ENCODE measurements at regions of chr2 and their contacts with region 1.

Region 1: DNA sequence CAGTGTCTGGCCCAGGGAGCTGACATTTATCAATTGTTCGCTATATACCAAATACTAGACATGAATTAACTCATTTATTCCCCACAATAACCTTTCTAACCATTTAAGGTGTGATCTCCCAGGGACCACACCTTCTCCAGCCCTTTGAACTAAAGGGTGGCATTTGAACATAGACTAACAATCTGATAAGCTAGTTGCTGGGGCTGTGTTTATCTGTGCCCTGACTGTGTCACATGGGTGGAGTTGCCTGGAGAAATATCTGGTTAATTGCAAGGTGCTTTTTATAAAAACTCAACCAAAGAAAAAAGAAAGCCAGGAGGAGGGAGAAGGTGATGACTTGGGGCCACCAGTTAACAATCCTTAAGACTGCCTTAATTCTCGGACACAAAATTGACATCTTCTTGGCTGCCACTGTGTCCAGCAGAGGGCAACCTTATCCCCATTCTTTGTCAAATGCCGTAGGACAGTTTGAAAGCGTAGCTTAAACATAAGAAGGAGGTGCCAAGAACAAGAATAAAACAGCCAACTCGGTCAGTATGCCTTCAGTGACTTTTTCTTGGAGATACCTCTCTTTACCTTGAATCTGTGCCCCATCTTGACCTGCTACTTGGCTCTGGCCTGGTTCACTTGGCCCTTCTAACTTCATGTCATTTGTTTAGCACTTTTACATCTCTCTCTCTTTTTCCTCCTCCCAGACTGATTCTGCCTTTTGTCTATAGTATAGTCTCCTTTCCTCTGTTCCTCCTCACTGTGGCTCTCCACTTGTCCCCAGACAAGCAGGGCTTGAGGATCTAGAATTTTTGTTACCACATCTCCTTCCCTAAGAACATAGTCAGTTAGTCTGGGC is 183.4 kb downstream of the MYO3B start:
- DNase-seq: peak; percentile 79
- ATAC-seq: peak; percentile 88
- H3K4me3 Mint-ChIP-seq: peak overlapping the region; percentile 1
- H3K27ac Mint-ChIP-seq: peak overlapping the region; percentile 68
- H3K4me1 Mint-ChIP-seq: peaks cover 36% of the 10 kb centered on the region
- H3K27me3 Mint-ChIP-seq: peaks cover 14% of the 10 kb centered on the region

Region 2: DNA sequence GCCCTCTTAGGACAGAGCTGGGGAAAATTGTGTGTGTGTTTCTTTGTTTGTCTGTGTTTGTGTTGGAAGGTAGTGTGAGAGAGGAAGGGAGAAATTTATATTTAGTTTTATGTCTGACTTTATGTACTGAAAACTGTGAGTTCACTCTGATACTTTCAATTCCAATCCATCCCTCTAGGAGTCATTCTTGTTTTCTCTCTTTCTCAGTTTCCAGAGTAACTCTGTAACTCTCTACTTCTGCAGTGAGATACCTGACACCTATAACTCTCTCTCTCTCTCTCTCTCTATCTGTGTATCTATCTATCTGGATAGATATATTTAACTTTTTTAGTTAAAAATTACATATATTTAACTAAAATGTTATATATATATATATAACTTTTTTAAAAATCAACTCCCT is 405.4 kb before region 1 on chr2:
- CTCF ChIA-PET with region 1: no interaction called
- POLR2A ChIA-PET with region 1: no interaction called
- DNase-seq: no peak
- ATAC-seq: no peak
- H3K4me3 Mint-ChIP-seq: no peak overlapping the region
- H3K27ac Mint-ChIP-seq: no peak overlapping the region
- H3K4me1 Mint-ChIP-seq: no peaks in the 10 kb centered on the region
- H3K27me3 Mint-ChIP-seq: no peaks in the 10 kb centered on the region

Region 3: DNA sequence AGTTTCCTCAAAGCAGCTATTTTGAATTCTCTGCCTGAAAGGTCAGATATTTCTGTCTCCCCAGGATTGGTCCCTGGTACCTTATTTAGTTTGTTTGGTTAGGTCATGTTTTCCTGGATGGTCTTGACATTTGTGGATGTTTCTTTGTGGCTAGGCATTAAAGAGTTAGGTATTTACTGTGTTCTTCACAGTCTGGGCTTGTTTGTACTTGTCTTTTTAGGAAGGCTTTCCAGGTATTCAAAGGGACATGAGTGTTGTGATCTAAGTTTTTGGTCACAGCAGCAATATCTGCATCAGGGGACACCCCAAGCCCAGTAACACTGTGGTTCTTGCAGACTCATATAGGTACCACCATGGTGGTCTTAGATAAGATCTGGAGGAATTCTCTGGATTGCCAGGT is 171.6 kb before region 1 on chr2:
- CTCF ChIA-PET with region 1: no interaction called
- POLR2A ChIA-PET with region 1: no interaction called
- DNase-seq: no peak
- ATAC-seq: no peak
- H3K4me3 Mint-ChIP-seq: no peak overlapping the region
- H3K27ac Mint-ChIP-seq: no peak overlapping the region
- H3K4me1 Mint-ChIP-seq: no peaks in the 10 kb centered on the region
- H3K27me3 Mint-ChIP-seq: peaks cover 15% of the 10 kb centered on the region

Region 4: GRCh38 chr2:170292415-170292814 is 68.9 kb before region 1 on chr2:
- CTCF ChIA-PET with region 1: no interaction called
- POLR2A ChIA-PET with region 1: no interaction called
- DNase-seq: no peak
- ATAC-seq: no peak
- H3K4me3 Mint-ChIP-seq: no peak overlapping the region
- H3K27ac Mint-ChIP-seq: no peak overlapping the region
- H3K4me1 Mint-ChIP-seq: no peaks in the 10 kb centered on the region
- H3K27me3 Mint-ChIP-seq: peaks cover 47% of the 10 kb centered on the region

Region 5: GRCh38 chr2:170335351-170335750 is 26.0 kb before region 1 on chr2:
- CTCF ChIA-PET with region 1: interaction called, 11 read pairs
- POLR2A ChIA-PET with region 1: no interaction called
- DNase-seq: no peak
- ATAC-seq: no peak
- H3K4me3 Mint-ChIP-seq: no peak overlapping the region
- H3K27ac Mint-ChIP-seq: no peak overlapping the region
- H3K4me1 Mint-ChIP-seq: peaks cover 25% of the 10 kb centered on the region
- H3K27me3 Mint-ChIP-seq: peaks cover 25% of the 10 kb centered on the region

Region 6: GRCh38 chr2:170341684-170342623 is 19.4 kb before region 1 on chr2:
- CTCF ChIA-PET with region 1: interaction called, 50 read pairs
- POLR2A ChIA-PET with region 1: no interaction called
- DNase-seq: no peak
- ATAC-seq: no peak
- H3K4me3 Mint-ChIP-seq: no peak overlapping the region
- H3K27ac Mint-ChIP-seq: peak overlapping the region; percentile 57
- H3K4me1 Mint-ChIP-seq: peaks cover 34% of the 10 kb centered on the region
- H3K27me3 Mint-ChIP-seq: peaks cover 2% of the 10 kb centered on the region